Activated CD4-positive, alpha-beta T cell treated with anti-CD3 and anti-CD28 coated beads, Interleukin-2, amount 10 ng/mL, durations not matched to agents 7 days and 5 days (primary cell): ENCODE measurements at regions of chr6 and their contacts with region 1.

Region 1: GRCh38 chr6:158072083-158072721 is 90.5 kb downstream of the SYNJ2 start:
- DNase-seq: peak; percentile 77
- H3K4me3 Mint-ChIP-seq: no peak overlapping the region
- H3K27ac Mint-ChIP-seq: no peak overlapping the region
- H3K4me1 Mint-ChIP-seq: peaks cover 32% of the 10 kb centered on the region
- H3K27me3 Mint-ChIP-seq: no peaks in the 10 kb centered on the region

Region 2: DNA sequence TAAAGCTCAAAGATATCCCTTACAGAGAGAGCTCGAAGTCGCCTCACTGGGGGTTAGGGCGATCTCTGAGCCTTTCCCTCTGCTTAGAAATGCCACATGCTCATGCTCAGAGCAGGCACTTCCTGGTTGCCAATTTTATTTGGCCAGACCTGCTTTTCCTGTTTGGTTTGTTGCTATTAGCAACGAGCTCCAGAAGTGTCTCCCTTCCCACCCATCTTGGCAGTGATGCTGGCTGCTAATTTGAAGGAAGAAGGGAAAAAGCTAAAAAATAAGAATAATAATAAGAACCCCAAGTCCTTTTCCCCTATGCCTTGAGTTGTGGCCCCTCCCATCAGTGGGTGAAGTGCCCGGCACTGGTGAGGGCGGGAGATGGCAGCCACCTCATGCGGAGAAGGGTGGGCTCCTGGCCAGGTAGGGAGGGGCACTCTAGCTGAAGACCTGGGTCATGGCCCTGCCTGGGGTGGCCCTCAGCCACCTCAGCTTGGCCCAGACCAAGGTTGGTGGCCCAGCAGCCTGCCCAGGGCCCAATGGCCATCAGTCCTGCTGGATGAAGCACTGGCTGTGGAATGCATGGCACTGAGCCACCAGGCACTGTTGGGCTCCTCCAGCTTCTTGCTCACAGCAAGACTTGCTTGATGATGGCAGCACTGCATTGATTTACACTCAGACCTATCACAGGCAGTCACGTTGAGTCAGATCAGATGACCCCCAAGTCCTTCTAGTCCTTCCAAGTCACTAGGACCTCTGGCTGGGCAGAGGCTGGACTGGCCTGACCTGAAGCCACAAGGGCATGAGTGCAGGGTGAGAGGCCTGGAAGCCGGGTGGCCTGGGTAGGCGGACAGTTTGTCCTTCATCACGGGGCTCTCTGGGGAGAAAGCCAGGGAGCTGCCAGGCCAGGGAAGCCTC is 11.5 kb before region 1 on chr6:
- CTCF ChIA-PET with region 1: interaction called, 11 read pairs
- POLR2A ChIA-PET with region 1: interaction called, 4 read pairs
- DNase-seq: no peak
- H3K4me3 Mint-ChIP-seq: no peak overlapping the region
- H3K27ac Mint-ChIP-seq: peak overlapping the region; percentile 68
- H3K4me1 Mint-ChIP-seq: peaks cover 42% of the 10 kb centered on the region
- H3K27me3 Mint-ChIP-seq: no peaks in the 10 kb centered on the region

Region 3: GRCh38 chr6:158086504-158087223 is 14.5 kb after region 1 on chr6:
- CTCF ChIA-PET with region 1: interaction called, 16 read pairs
- POLR2A ChIA-PET with region 1: no interaction called
- DNase-seq: peak; percentile 45
- H3K4me3 Mint-ChIP-seq: peak overlapping the region; percentile 32
- H3K27ac Mint-ChIP-seq: peak overlapping the region; percentile 83
- H3K4me1 Mint-ChIP-seq: peaks cover 24% of the 10 kb centered on the region
- H3K27me3 Mint-ChIP-seq: no peaks in the 10 kb centered on the region

Region 4: DNA sequence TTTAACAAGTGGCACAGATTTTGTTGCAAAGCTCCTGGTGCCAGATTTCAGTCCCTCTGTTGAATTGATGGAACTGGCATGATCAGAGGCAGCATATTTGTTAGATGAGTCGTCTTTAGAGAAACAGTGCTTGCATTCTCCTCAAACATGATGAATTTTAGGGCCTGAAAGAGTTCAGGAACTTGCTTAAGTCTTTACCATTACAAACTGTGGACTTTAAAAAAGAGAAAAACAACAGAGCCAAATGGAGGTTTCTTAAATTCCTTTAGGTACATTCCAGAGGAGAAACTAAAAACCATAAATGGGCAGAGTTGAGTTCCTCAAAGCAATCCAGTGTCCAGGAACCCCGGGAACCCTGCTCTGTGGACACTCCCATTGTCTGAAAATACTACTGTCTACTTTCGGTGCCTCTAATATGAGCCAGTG is 98.5 kb after region 1 on chr6:
- CTCF ChIA-PET with region 1: no interaction called
- POLR2A ChIA-PET with region 1: no interaction called
- DNase-seq: no peak
- H3K4me3 Mint-ChIP-seq: no peak overlapping the region
- H3K27ac Mint-ChIP-seq: no peak overlapping the region
- H3K4me1 Mint-ChIP-seq: peaks cover 26% of the 10 kb centered on the region
- H3K27me3 Mint-ChIP-seq: no peaks in the 10 kb centered on the region